IMR-90 (cell line): ENCODE measurements at regions of chr9 and their contacts with region 1.

Region 1: DNA sequence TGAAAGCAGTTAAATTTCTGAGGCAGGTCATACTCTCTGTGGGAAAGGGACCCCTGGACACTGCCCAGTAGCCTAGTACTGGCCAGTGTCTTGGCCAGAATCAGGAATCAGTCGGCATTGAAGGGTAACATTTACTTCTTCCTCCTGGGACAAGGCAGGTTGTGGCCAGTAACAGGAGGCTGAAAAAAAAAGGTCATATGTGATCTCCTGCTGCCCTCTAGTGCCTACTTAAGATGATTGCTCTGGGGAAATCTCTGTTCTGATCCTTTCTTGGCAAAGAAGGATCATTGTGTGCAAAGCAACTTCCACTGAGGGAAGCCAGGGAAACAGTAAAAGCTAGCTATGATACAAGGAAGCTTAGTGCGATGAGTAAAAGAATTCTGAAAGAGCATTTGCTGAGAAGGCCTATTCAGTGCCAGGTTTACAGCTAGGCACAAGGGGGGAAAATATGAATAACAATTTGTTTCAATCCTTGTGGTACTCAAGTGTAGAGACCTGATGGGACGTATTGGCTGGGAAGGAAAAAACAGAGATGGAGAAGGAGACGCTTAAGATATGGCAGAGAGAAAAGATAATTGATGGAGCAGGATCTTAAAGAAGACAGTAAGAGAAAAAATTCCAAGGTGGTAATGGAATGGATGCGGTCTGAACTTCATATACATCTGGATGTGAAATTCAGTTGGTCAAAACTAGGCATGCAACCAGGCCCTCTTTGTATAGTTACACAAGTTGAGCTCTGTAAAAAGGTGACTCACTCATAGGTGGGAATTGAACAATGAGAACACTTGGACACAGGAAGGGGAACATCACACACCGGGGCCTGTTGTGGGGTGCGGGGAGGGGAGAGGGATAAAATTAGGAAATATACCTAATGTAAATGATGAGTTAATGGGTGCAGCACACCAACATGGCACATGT is 25.8 kb upstream of the TRIM32 start:
- DNase-seq: peak; percentile 84
- ATAC-seq: peak; percentile 86
- H3K4me3 ChIP-seq: no peak overlapping the region
- H3K27ac ChIP-seq: no peak overlapping the region
- H3K4me1 ChIP-seq: peaks cover 3% of the 10 kb centered on the region; the same call in 1 of the 2 replicates
- H3K27me3 ChIP-seq: no peaks in the 10 kb centered on the region; the same call in 1 of the 2 replicates
- CTCF ChIP-seq: peak; percentile 82
- POLR2A ChIP-seq: no peak
- RAD21 ChIP-seq: peak; percentile 86

Region 2: DNA sequence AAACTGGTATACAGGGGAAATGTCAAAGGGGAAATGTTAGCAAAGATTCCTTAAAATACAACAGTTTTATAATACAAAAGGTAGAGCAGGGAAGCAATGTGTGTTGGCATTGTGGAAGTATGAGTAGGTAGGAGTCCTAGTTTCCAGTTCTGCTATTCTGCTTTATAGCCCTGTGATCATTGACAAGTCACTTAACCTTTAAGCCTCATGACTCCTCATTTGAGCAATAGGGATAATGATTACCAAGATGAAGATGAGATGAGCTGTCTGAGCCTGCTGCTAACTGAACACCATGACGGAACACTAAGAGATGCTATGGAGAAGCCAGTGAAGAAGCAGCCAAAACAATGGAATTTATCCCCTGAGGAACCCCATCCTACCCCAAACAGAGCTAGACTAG is 256.0 kb before region 1 on chr9:
- CTCF ChIA-PET with region 1: no interaction called
- POLR2A ChIA-PET with region 1: no interaction called
- dilution Hi-C with region 1: no loop called
- in situ Hi-C with region 1: no loop called
- intact Hi-C with region 1: loop called (anchors 10 kb)
- DNase-seq: no peak
- ATAC-seq: no peak
- H3K4me3 ChIP-seq: no peak overlapping the region
- H3K27ac ChIP-seq: no peak overlapping the region
- H3K4me1 ChIP-seq: no peaks in the 10 kb centered on the region
- H3K27me3 ChIP-seq: no peaks in the 10 kb centered on the region; the same call in 1 of the 2 replicates
- CTCF ChIP-seq: no peak
- POLR2A ChIP-seq: no peak
- RAD21 ChIP-seq: no peak

Region 3: GRCh38 chr9:116589392-116590354 is 71.6 kb before region 1 on chr9:
- CTCF ChIA-PET with region 1: no interaction called
- POLR2A ChIA-PET with region 1: no interaction called
- dilution Hi-C with region 1: no loop called
- in situ Hi-C with region 1: no loop called
- intact Hi-C with region 1: loop called (anchors 5 kb)
- DNase-seq: peak; percentile 69
- ATAC-seq: peak; percentile 54
- H3K4me3 ChIP-seq: no peak overlapping the region
- H3K27ac ChIP-seq: no peak overlapping the region
- H3K4me1 ChIP-seq: peaks cover 2% of the 10 kb centered on the region; the same call in 1 of the 2 replicates
- H3K27me3 ChIP-seq: no peaks in the 10 kb centered on the region
- CTCF ChIP-seq: peak; percentile 64
- POLR2A ChIP-seq: no peak
- RAD21 ChIP-seq: peak; percentile 60

Region 4: DNA sequence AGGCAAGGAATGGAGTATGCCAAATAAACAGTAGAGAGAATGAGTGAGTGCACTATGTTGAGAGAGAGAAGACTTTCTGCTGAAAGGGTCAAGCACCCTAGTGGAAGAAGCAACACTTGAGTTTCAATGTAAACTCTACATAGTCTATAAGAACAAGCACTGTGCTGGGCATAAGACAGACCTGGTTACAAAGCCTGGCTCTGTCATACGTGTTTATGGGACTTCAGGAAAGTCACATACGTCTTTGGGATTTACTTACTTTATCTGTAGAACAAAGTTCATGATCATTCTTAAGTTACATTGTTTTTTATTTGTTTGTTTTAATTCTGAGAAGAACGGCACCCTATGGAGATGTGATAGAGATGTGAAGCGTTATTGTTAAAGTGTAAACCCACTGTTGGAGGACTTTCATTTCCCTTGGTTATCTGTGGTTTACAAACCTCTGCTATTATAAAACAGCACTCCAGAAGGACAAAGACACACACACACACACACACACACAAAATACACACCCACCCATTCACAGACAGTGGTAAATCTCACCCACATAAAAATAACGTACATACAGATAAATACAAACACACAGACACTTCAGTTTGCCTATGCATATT is 44.9 kb before region 1 on chr9:
- CTCF ChIA-PET with region 1: no interaction called
- POLR2A ChIA-PET with region 1: no interaction called
- dilution Hi-C with region 1: no loop called
- in situ Hi-C with region 1: no loop called
- intact Hi-C with region 1: no loop called
- DNase-seq: no peak
- ATAC-seq: no peak
- H3K4me3 ChIP-seq: no peak overlapping the region
- H3K27ac ChIP-seq: no peak overlapping the region
- H3K4me1 ChIP-seq: no peaks in the 10 kb centered on the region
- H3K27me3 ChIP-seq: no peaks in the 10 kb centered on the region
- CTCF ChIP-seq: no peak
- POLR2A ChIP-seq: no peak
- RAD21 ChIP-seq: no peak